Natural killer cell (primary cell): ENCODE measurements at regions of chr5 and their contacts with region 1.

Region 1: DNA sequence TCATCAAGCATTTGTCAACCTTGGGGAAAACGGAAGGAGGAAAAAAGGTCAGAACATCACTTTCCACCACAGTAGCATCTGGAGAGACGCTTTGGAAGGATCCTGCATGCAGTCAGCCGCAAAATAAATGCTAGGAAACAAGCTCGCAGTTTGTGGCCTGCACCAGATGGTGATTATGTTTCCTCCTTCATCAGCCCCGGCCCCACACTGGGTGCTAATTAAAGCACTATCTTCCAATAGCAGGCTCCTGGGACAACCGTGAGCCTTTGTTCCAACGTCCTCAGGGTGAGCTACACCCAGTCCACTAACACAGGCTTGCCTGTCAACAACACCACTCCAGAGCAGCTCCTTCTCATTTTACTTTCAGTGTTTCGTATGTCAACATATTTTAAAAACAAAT is 64.0 kb downstream of the RNF130 start:
- DNase-seq: no peak
- ATAC-seq: peak; percentile 15 to 43 (median 39)
- H3K4me3 ChIP-seq: no peak overlapping the region
- H3K4me3 Mint-ChIP-seq: peak overlapping the region; percentile 90
- H3K27ac ChIP-seq: peak overlapping the region; percentile 63
- H3K27ac Mint-ChIP-seq: peak overlapping the region; percentile 86 to 94
- H3K4me1 ChIP-seq: peaks cover 19% of the 10 kb centered on the region
- H3K4me1 Mint-ChIP-seq: peaks cover 37 to 43% of the 10 kb centered on the region in 2 donors
- H3K27me3 ChIP-seq: no peaks in the 10 kb centered on the region
- H3K27me3 Mint-ChIP-seq: no peaks in the 10 kb centered on the region
- CTCF ChIP-seq: no peak

Region 2: GRCh38 chr5:179923436-179923835 is 84.1 kb before region 1 on chr5:
- intact Hi-C with region 1: no loop called
- DNase-seq: no peak
- ATAC-seq: no peak
- H3K4me3 ChIP-seq: no peak overlapping the region
- H3K4me3 Mint-ChIP-seq: no peak overlapping the region
- H3K27ac ChIP-seq: no peak overlapping the region
- H3K27ac Mint-ChIP-seq: no peak overlapping the region
- H3K4me1 ChIP-seq: no peaks in the 10 kb centered on the region
- H3K4me1 Mint-ChIP-seq: no peaks in the 10 kb centered on the region
- H3K27me3 ChIP-seq: no peaks in the 10 kb centered on the region
- H3K27me3 Mint-ChIP-seq: peaks cover 0 to 2% of the 10 kb centered on the region in 2 donors
- CTCF ChIP-seq: no peak

Region 3: DNA sequence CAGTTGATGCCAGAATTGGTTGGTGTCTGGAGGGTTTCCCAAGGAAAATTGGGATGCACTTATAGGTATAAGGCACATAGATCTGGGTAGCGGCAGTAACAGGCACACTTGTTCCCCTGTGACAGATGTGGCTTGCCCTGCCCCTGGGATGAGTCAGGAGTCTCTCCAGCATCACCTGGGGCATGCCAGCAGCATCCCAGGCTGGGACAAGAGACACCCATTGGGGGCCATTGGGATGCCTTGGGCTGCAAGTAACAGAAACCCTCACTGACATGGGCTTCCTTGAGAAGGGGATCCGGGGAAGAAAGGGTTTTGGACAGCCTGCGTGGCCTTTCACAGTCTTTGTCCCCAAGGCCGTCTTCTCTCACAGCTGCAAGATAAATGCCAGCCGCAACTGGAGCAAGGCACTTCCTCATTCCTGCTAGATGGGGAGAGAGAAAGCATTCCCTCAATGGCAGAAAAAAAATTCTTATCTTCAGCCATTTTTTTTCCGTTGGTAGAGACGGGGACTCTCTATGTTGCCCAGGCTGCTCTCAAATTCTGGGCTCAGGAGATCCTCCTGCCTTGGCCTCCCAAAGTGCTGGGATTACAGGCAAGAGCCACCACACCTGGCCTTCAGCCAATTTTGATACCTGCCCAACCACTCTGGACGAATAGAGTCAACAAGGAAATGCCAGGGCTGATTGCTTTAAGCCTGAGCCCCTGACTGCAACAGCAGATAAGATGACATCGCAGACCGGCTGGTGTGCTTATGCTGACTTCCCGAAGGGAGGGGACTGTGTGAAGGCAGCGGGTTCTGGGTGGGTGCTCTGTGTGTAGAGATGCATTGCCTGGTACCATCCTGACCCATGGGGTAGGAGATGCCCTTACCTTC is 77.3 kb after region 1 on chr5:
- intact Hi-C with region 1: loop called (anchors 5 kb)
- DNase-seq: peak in 1 of 2 donors; percentile 30
- ATAC-seq: peak; percentile 53 to 61 (median 55)
- H3K4me3 ChIP-seq: no peak overlapping the region
- H3K4me3 Mint-ChIP-seq: peak overlapping the region; percentile 28
- H3K27ac ChIP-seq: no peak overlapping the region
- H3K27ac Mint-ChIP-seq: no peak overlapping the region
- H3K4me1 ChIP-seq: peaks cover 45% of the 10 kb centered on the region
- H3K4me1 Mint-ChIP-seq: peaks cover 30 to 52% of the 10 kb centered on the region in 2 donors
- H3K27me3 ChIP-seq: peaks cover 14% of the 10 kb centered on the region
- H3K27me3 Mint-ChIP-seq: peaks cover 23 to 26% of the 10 kb centered on the region in 2 donors
- CTCF ChIP-seq: no peak

Region 4: DNA sequence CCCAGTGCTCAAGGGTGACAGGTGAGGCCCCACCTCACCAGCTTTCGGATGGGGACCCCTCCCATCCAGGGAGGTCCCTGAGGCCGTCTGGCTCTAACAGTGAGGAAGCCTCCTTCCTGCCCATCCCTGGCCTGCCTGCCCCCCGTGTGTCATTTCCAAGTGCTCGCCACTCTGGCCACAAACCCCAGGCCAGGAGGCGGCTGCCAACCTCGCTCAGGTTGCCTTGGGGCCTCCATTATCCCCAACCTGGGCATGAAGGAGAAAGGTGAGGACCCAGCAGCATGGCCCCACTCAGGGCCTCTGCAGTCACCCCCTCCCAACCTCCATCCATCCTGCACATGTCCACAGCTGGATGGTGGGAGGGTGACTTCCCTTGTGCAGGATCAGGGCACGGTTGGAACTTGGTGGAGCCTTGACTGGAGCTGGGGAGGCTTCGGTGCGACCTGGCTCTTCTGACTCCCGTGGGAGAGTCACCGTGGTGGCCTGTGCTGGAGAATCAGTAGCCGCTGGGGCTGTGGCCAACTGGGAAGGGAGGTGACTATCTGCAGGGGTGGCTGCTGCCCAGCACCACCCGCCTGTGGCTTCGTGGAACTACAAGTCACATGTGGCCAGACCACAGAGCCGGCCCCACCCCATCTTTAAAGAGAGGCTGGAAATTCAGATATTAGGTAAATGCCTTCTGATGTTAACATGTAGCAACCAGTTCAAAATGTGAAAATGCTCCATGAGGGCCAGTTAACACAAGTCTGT is 383.0 kb after region 1 on chr5:
- intact Hi-C with region 1: no loop called
- DNase-seq: no peak
- ATAC-seq: peak in 1 of 3 donors; percentile 45
- H3K4me3 ChIP-seq: no peak overlapping the region
- H3K4me3 Mint-ChIP-seq: no peak overlapping the region
- H3K27ac ChIP-seq: no peak overlapping the region
- H3K27ac Mint-ChIP-seq: no peak overlapping the region
- H3K4me1 ChIP-seq: peaks cover 5% of the 10 kb centered on the region
- H3K4me1 Mint-ChIP-seq: no peaks in the 10 kb centered on the region
- H3K27me3 ChIP-seq: no peaks in the 10 kb centered on the region
- H3K27me3 Mint-ChIP-seq: peaks cover 0 to 4% of the 10 kb centered on the region in 2 donors
- CTCF ChIP-seq: no peak